ENCODE measurements at regions of chr20 and their contacts with region 1.

Region 1: DNA sequence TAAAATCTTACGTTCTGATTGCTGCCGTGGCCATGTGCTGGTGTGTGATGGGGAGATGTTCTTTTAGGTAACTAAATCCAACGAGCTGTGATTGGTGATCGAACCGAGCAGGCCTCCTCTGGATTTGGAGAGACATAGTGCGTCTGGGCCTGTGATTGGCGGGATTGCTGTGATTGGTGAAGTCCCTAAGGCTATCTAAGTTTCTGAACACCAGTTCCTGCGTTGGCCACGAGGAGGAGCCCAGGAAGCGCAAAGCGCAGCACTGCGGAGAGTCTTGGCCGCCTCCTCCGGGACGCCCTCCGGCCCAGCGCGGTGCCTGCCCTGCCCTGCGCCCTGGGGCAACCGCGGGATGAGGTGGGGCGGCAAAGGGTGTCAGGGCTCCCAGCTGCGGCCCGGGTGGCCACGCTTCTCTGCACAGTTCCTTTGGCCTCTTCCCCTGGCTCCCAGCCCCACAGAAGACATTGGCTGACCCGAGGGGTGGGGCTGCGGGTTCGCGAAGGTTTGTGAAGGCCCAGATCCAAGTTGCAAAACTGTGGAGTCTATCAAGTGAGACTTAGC is 33.0 kb downstream of the HNF4A start:
- DNase-seq: peak; percentile 87
- H3K4me3 Mint-ChIP-seq: no peak overlapping the region
- H3K27ac Mint-ChIP-seq: no peak overlapping the region
- H3K4me1 Mint-ChIP-seq: peaks cover 14% of the 10 kb centered on the region
- H3K27me3 Mint-ChIP-seq: no peaks in the 10 kb centered on the region
- CTCF ChIP-seq: peak; percentile 96

Region 2: DNA sequence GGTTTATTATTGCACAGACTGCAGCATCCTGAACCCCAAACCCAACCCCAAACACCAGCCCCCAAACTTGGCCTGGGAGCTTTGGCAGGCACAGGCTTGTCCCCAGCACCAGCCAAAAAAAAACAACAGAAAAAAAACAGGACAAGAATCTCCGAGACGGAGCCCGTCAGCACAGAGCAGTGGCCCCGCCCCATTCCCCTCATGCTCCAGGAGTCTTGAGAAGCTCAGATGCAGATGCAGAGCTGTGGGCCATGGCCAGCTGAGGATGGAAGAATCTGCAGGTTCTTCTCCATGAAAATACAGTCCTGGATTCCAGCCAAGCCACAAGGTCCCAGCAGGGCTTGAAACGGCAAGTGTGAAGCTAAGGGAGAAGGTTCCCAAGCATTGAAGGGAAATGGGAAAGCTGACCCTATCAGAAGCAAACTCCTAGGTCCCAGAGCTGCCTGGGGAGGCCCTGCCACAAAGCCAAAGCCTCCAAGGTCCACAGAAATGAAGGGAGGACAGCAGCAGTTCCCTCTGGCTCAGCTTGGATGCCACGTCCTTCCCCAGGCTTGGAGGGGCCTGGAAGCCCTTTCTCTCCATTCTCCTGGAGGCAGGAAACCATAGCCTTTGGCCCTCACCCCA is 276.7 kb before region 1 on chr20:
- CTCF ChIA-PET with region 1: no interaction called
- intact Hi-C with region 1: loop called (anchors 1 kb)
- DNase-seq: no peak
- H3K4me3 Mint-ChIP-seq: no peak overlapping the region
- H3K27ac Mint-ChIP-seq: no peak overlapping the region
- H3K4me1 Mint-ChIP-seq: no peaks in the 10 kb centered on the region
- H3K27me3 Mint-ChIP-seq: peaks cover 75% of the 10 kb centered on the region
- CTCF ChIP-seq: no peak

Region 3: DNA sequence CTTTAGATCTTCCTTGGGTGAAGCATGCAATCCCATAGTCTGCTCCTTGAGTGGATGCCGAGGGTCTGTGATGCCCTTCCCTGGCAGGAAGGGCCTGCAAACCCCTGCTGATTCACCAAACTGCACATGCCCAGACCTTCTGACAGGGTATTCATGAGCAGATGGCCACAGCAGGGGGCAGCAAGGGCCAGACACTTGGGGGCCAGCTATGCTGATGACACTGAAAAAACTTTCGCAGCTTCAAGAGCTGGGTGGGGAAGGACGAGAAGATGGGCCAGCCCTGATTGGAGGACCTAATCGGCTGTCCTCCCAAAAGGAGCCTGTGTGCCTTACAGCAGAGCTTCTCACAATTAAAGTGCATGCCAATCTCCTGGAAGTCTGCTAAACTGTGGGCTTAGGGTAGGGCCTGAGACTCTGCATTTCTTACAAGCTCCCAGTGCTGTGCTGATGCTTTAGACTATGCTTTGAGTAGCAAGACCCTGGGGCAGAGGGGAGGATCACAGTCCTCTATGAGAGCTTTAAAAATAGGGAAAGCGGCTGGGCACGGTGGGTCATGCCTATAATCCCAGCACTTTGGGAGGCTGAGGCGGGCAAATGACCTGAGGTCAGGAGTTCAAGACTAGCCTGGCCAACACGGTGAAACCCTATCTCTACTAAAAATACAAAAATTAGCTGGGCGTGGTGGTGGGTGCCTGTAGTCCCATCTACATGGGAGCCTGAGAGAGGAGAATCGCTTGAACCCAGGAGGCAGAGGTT is 156.7 kb before region 1 on chr20:
- CTCF ChIA-PET with region 1: no interaction called
- intact Hi-C with region 1: loop called (anchors 5 kb)
- DNase-seq: no peak
- H3K4me3 Mint-ChIP-seq: no peak overlapping the region
- H3K27ac Mint-ChIP-seq: no peak overlapping the region
- H3K4me1 Mint-ChIP-seq: no peaks in the 10 kb centered on the region
- H3K27me3 Mint-ChIP-seq: no peaks in the 10 kb centered on the region
- CTCF ChIP-seq: no peak

Region 4: DNA sequence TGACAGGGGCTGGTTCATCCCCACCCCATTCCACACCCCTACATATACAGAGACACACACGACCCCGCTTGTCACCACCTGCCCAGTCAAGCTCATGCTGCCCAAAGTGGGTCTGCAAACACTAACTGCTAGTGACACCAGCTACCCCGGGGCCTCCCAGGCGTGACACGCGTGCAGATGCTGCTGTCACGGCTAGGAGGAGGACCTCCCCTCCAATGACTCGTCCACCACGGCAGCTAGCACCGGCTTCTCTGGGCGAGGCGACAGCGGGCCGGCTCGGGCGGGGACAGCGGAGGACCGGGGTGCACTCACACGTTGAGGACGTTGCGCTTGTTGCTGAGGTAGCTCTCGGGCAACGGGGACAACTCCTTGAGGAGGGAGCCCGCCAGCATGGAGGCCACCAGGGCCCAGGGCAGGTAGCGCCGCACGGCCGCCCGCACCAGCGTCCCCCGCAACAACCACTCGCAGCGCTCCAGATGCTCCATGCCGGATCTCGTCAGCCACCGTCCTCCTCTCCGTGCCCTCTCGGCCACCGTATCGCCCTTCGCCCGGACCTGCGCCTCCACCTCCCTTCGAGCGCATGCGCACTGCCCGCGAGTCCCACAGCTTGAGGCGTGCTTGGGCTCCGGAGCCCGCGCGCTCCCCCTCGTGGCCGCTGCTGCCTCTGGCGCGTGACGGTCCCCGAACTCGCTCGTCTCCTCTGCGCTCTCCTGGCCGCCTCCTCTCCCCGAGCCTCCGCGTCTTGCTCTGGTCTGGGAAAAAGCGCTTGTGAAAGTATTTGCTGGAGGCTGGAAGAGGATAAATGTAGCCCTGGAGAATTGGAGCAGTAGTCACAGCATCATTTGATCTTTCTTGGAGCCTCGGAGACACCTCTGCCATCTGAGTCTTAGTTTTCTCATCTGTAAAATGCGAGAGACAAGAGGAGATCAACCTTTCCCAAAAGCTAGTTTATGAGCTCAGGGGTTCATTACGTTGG is 77.6 kb before region 1 on chr20 and contains the start of gene FITM2:
- CTCF ChIA-PET with region 1: interaction called, 10 read pairs
- intact Hi-C with region 1: loop called (anchors 5 kb)
- DNase-seq: peak; percentile 100
- H3K4me3 Mint-ChIP-seq: peak within 1 kb of the TSS; percentile 98
- H3K27ac Mint-ChIP-seq: peak within 1 kb of the TSS; percentile 83
- H3K4me1 Mint-ChIP-seq: peaks cover 12% of the 10 kb centered on the region
- H3K27me3 Mint-ChIP-seq: no peaks in the 10 kb centered on the region
- CTCF ChIP-seq: peak; percentile 98
- total RNA-seq, gene FITM2: 11.7 and 13.0 TPM in 2 replicates

Region 5: DNA sequence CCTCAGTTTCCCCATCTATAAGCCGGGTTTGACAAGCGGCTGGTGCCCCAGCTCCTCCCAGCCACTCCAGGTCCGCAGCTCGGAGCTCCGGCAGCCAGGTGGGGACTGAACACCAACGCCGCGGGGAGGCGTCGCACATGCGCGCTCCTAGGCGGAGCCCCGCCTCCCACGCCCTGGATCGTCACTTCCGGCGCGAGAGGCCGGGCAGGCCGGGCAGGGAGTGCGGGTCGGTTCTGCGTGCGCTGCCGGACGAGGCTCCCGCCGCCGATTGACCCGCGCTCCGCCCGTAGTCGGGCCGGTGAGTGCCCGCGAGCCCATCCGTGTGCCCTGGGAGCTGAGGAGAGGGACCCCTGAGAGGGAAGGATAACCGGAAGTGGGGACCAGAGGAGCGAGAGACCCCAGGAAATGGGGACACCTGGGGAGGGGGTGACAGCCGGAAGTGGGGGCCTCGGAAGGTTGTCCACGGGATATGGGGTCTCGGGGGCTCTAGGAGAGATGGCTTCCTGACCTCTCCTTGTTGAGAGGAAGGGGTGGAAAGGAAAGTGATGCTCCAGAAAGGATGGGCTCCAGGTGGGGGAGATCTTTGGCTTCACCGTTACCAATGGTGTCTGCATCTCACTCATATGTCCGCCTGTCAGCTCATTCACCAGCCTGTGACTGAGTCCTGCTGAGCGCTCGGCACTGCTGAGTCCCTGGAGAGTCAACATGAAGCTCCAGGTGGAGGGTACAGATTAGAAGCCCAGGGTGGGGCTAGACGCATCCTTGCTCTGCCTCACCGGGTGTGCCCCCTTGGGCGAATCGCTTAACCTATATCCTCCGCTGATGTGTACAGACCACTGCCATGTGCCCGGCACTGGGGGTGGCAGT is 87.4 kb after region 1 on chr20 and contains the start of gene TTPAL:
- CTCF ChIA-PET with region 1: interaction called, 11 read pairs
- intact Hi-C with region 1: no loop called
- DNase-seq: peak; percentile 98
- H3K4me3 Mint-ChIP-seq: peak within 1 kb of the TSS; percentile 100
- H3K27ac Mint-ChIP-seq: peak within 1 kb of the TSS; percentile 94
- H3K4me1 Mint-ChIP-seq: peaks cover 26% of the 10 kb centered on the region
- H3K27me3 Mint-ChIP-seq: no peaks in the 10 kb centered on the region
- CTCF ChIP-seq: no peak
- total RNA-seq, gene TTPAL: 39.9 and 42.2 TPM in 2 replicates